Heart right ventricle (tissue), 16 donors: ENCODE measurements at regions of chr7 and their contacts with region 1.

Region 1: GRCh38 chr7:131546583-131547111 is 9.8 kb downstream of the PODXL start:
- DNase-seq: no peak
- ATAC-seq: peak in 1 of 8 donors; percentile 12
- H3K4me3 ChIP-seq: no peak overlapping the region
- H3K27ac ChIP-seq: peak overlapping the region in 5 of 10 donors; percentile 21 to 92 (median 83)
- H3K4me1 ChIP-seq: peaks cover 9 to 97% (median 53%) of the 10 kb centered on the region in 9 donors
- H3K27me3 ChIP-seq: no peaks in the 10 kb centered on the region
- CTCF ChIP-seq: peak; percentile 18 to 74 (median 63)

Region 2: GRCh38 chr7:131507592-131508331 is 38.9 kb before region 1 on chr7:
- intact Hi-C with region 1: loop called in 5 of 10 experiments (anchors 2 to 5 kb)
- DNase-seq: peak; percentile 83 to 87
- ATAC-seq: peak; percentile 57 to 77 (median 73)
- H3K4me3 ChIP-seq: peak overlapping the region in 1 of 10 donors; percentile 11
- H3K27ac ChIP-seq: peak overlapping the region in 6 of 10 donors; percentile 23 to 60 (median 46)
- H3K4me1 ChIP-seq: peaks cover 20 to 77% (median 53%) of the 10 kb centered on the region in 9 donors
- H3K27me3 ChIP-seq: no peaks in the 10 kb centered on the region
- CTCF ChIP-seq: peak; percentile 90 to 98 (median 94)

Region 3: GRCh38 chr7:131557651-131558385 is 11.2 kb after region 1 on chr7:
- intact Hi-C with region 1: no loop called
- DNase-seq: peak; percentile 60 to 62
- ATAC-seq: peak in 5 of 8 donors; percentile 18 to 65 (median 62)
- H3K4me3 ChIP-seq: peak overlapping the region in 9 of 10 donors; percentile 64 to 92 (median 82)
- H3K27ac ChIP-seq: peak overlapping the region; percentile 42 to 95 (median 90)
- H3K4me1 ChIP-seq: peaks cover 2 to 53% (median 28%) of the 10 kb centered on the region in 9 donors
- H3K27me3 ChIP-seq: peaks cover 0 to 50% (median 0%) of the 10 kb centered on the region in 7 donors
- CTCF ChIP-seq: no peak